Heart left ventricle (tissue), 16 donors: ENCODE measurements at regions of chr6 and their contacts with region 1.

Region 1: GRCh38 chr6:125584468-125585029 is 164.9 kb upstream of the HEY2 start:
- DNase-seq: peak; percentile 61 to 84 (median 74)
- ATAC-seq: peak; percentile 93 to 96 (median 94)
- H3K4me3 ChIP-seq: no peak overlapping the region
- H3K27ac ChIP-seq: peak overlapping the region in 11 of 12 donors; percentile 31 to 82 (median 65)
- H3K4me1 ChIP-seq: peaks cover 0 to 26% (median 3%) of the 10 kb centered on the region in 12 donors
- H3K27me3 ChIP-seq: no peaks in the 10 kb centered on the region
- CTCF ChIP-seq: peak in 7 of 12 donors; percentile 19 to 55 (median 33)
- POLR2A ChIP-seq: peak in 1 of 2 donors; percentile 17

Region 2: DNA sequence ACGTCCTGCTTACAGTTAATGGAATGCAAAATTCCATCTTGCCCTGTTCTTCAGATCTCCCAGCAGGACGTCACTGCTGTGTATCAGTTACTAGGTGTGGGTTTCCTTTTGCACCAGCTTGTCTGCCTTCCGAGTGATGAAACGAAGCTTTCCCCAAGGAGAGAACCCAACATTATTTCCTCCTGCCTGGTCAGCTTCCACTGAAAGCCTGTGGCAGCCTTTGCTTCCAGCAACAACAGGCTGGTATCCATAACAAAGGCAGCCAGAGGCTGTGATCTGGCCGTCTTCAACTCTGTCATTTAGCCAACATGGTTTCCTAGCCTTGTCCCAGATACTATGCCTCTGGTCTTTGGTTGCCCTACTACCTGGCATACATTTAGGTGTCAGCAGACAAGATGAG is 86.0 kb after region 1 on chr6:
- intact Hi-C with region 1: loop called in 1 of 10 experiments (anchors 5 kb)
- DNase-seq: peak in 4 of 5 donors; percentile 30 to 73 (median 60)
- ATAC-seq: peak; percentile 92 to 96 (median 96)
- H3K4me3 ChIP-seq: peak overlapping the region in 2 of 12 donors; percentile 10 to 20
- H3K27ac ChIP-seq: peak overlapping the region in 9 of 12 donors; percentile 14 to 74 (median 45)
- H3K4me1 ChIP-seq: peaks cover 0 to 10% (median 0%) of the 10 kb centered on the region in 12 donors
- H3K27me3 ChIP-seq: no peaks in the 10 kb centered on the region
- CTCF ChIP-seq: no peak
- POLR2A ChIP-seq: no peak

Region 3: DNA sequence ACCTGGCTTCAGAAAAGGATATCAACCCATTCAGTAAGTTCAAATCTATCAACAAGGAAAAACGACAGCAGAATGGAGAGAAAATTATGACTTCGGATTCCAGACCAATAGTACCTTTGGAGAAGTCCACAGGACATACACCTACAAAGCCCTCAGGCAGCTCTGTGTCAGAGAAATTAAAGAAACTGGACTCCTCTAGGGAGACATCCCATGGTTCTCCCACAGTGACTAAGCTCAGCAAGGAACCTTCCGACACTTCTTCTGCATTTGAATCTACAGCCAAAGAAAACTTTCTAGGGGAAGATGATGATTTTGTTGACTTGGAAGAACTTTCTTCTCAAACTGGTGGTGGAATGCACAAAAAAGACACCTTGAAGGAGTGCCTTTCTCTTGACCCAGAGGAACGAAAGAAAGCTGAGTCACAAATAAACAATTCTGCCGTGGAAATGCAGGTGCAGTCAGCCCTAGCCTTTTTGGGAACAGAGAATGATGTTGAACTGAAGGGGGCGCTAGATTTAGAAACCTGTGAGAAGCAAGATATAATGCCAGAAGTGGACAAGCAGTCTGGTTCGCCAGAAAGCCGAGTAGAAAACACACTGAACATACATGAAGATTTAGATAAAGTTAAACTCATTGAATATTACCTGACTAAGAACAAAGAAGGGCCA is 304.6 kb after region 1 on chr6:
- intact Hi-C with region 1: no loop called
- DNase-seq: no peak
- ATAC-seq: no peak
- H3K4me3 ChIP-seq: no peak overlapping the region
- H3K27ac ChIP-seq: no peak overlapping the region
- H3K4me1 ChIP-seq: no peaks in the 10 kb centered on the region
- H3K27me3 ChIP-seq: no peaks in the 10 kb centered on the region
- CTCF ChIP-seq: peak in 9 of 12 donors; percentile 4 to 42 (median 24)
- POLR2A ChIP-seq: no peak